CD4-positive, alpha-beta memory T cell (primary cell): ENCODE measurements at regions of chrX and their contacts with region 1.

Region 1: DNA sequence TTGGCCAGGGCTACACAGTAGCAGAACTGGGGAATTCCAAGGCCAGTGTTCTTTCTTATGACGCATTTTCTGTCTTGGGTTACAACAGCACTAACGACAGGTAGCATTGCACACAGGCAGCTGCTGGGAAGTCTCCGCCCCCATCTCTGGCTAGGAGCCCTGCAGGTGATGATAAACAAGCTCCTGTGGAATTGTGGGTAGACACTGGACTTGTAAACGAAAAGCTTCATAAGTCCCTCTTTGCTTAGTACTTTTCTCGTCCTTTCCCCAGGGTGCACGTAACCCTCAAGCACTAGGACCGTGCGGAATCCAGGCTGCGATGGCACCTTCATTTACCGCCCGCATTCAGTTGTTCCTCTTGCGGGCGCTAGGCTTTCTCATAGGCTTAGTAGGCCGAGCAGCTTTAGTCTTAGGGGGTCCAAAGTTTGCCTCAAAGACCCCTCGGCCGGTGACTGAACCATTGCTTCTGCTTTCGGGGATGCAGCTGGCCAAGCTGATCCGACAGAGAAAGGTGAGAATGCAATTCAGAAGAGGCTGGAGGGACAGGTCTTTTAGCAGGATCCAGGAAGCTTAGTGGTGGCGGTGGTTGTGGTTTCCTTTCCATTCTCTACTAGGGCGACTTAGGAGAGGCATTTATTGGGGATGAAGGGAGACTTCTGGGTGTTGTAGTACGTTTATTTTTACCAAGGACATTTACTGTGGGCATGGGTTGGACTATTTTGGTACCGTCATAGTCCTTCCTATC is at the start of gene FAAH2:
- DNase-seq: peak; percentile 63 to 94 (median 81)
- H3K4me3 ChIP-seq: peak within 1 kb of the TSS; percentile 55 to 79
- H3K4me3 Mint-ChIP-seq: peak within 1 kb of the TSS; percentile 87 to 97 (median 92)
- H3K27ac ChIP-seq: peak within 1 kb of the TSS; percentile 82
- H3K27ac Mint-ChIP-seq: peak within 1 kb of the TSS; percentile 86 to 98 (median 95)
- H3K4me1 ChIP-seq: peaks cover 48% of the 10 kb centered on the region
- H3K4me1 Mint-ChIP-seq: peaks cover 19 to 52% (median 30%) of the 10 kb centered on the region in 4 donors
- H3K27me3 ChIP-seq: no peaks in the 10 kb centered on the region
- H3K27me3 Mint-ChIP-seq: peaks cover 0 to 1% of the 10 kb centered on the region in 2 donors
- total RNA-seq, gene FAAH2: 17.6 to 25.6 TPM

Region 2: DNA sequence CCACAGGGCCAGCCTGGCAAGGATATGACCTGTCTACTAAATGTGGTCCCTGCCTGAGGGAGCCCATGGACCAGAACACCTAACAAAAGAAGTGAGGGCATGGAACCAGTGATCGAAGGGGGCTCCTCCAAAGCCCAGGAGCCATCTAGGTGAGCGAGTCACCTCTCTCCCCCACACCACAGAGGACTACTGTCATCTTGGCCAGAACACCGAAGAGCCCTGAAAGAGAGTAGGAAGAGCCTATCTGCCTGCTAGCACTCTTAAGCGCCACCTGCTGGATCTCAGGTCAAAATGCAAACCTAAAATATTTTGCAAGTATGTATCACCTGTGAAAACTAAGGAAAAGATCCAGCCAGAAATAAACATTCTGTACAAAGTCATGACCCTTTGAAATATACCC is 167.2 kb after region 1 on chrX:
- CTCF ChIA-PET with region 1: interaction called, 59 read pairs
- POLR2A ChIA-PET with region 1: no interaction called
- intact Hi-C with region 1: loop called (anchors 1 kb)
- DNase-seq: peak; percentile 25 to 36 (median 33)
- H3K4me3 ChIP-seq: no peak overlapping the region
- H3K4me3 Mint-ChIP-seq: no peak overlapping the region
- H3K27ac ChIP-seq: no peak overlapping the region
- H3K27ac Mint-ChIP-seq: peak overlapping the region in 2 of 7 donors; percentile 29 to 68
- H3K4me1 ChIP-seq: no peaks in the 10 kb centered on the region
- H3K4me1 Mint-ChIP-seq: peaks cover 0 to 2% (median 0%) of the 10 kb centered on the region in 4 donors
- H3K27me3 ChIP-seq: no peaks in the 10 kb centered on the region
- H3K27me3 Mint-ChIP-seq: no peaks in the 10 kb centered on the region

Region 3: DNA sequence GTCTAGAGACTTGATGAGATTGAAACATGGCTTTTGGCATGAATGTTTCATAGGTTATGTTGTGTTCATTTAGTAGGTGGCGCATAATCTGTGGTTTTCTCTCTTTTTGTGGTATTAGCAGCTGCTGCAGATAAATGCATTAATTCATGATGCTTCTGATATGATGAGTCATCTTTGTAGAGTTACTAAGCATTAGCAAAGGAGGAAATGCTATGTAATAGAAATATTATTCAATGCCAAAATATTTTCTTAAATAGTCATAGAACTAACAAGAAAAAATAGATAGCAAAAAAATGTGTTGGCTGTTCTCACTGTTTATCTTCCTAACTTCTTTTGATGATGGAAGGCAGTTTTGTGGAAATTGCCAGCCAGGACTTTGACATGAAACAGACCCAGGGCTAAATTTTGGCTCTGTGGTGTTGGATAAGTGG is 308.7 kb after region 1 on chrX:
- CTCF ChIA-PET with region 1: no interaction called
- POLR2A ChIA-PET with region 1: no interaction called
- intact Hi-C with region 1: loop called (anchors 5 kb)
- DNase-seq: peak in 4 of 5 donors; percentile 15 to 30 (median 21)
- H3K4me3 ChIP-seq: peak overlapping the region in 1 of 2 donors; percentile 28
- H3K4me3 Mint-ChIP-seq: peak overlapping the region; percentile 23 to 85 (median 67)
- H3K27ac ChIP-seq: no peak overlapping the region
- H3K27ac Mint-ChIP-seq: peak overlapping the region in 4 of 7 donors; percentile 9 to 80 (median 26)
- H3K4me1 ChIP-seq: peaks cover 43% of the 10 kb centered on the region
- H3K4me1 Mint-ChIP-seq: peaks cover 29 to 61% (median 43%) of the 10 kb centered on the region in 4 donors
- H3K27me3 ChIP-seq: no peaks in the 10 kb centered on the region
- H3K27me3 Mint-ChIP-seq: no peaks in the 10 kb centered on the region

Region 4: GRCh38 chrX:57977992-57978391 is 691.3 kb after region 1 on chrX:
- CTCF ChIA-PET with region 1: no interaction called
- POLR2A ChIA-PET with region 1: no interaction called
- intact Hi-C with region 1: no loop called
- DNase-seq: no peak
- H3K4me3 ChIP-seq: no peak overlapping the region
- H3K4me3 Mint-ChIP-seq: no peak overlapping the region
- H3K27ac ChIP-seq: no peak overlapping the region
- H3K27ac Mint-ChIP-seq: no peak overlapping the region
- H3K4me1 ChIP-seq: no peaks in the 10 kb centered on the region
- H3K4me1 Mint-ChIP-seq: no peaks in the 10 kb centered on the region
- H3K27me3 ChIP-seq: no peaks in the 10 kb centered on the region
- H3K27me3 Mint-ChIP-seq: no peaks in the 10 kb centered on the region

Region 5: DNA sequence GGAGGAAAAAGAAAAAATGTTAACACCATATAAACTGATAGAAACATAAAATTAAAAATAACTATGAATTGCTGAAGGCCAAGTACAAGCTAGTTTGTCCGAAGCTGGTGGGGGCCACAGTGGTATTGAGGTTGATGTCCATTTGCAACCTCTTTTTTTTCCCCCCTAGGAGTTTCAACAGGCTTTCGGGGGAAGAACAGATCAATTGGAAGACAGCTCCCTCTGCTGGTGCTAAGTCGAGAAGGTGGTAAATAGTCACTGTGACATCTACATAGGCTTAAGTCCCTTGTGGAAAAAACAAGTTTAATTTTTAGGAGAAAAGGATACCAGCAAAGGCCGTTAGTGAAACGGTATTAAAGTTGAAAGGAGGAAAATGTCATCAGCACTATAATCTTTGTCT is 739.3 kb after region 1 on chrX:
- CTCF ChIA-PET with region 1: no interaction called
- POLR2A ChIA-PET with region 1: no interaction called
- intact Hi-C with region 1: loop called (anchors 5 kb)
- DNase-seq: peak; percentile 30 to 41 (median 33)
- H3K4me3 ChIP-seq: no peak overlapping the region
- H3K4me3 Mint-ChIP-seq: no peak overlapping the region
- H3K27ac ChIP-seq: no peak overlapping the region
- H3K27ac Mint-ChIP-seq: no peak overlapping the region
- H3K4me1 ChIP-seq: no peaks in the 10 kb centered on the region
- H3K4me1 Mint-ChIP-seq: peaks cover 0 to 6% (median 0%) of the 10 kb centered on the region in 4 donors
- H3K27me3 ChIP-seq: no peaks in the 10 kb centered on the region
- H3K27me3 Mint-ChIP-seq: no peaks in the 10 kb centered on the region